ENCODE measurements at regions of chr16 and their contacts with region 1.

Region 1: DNA sequence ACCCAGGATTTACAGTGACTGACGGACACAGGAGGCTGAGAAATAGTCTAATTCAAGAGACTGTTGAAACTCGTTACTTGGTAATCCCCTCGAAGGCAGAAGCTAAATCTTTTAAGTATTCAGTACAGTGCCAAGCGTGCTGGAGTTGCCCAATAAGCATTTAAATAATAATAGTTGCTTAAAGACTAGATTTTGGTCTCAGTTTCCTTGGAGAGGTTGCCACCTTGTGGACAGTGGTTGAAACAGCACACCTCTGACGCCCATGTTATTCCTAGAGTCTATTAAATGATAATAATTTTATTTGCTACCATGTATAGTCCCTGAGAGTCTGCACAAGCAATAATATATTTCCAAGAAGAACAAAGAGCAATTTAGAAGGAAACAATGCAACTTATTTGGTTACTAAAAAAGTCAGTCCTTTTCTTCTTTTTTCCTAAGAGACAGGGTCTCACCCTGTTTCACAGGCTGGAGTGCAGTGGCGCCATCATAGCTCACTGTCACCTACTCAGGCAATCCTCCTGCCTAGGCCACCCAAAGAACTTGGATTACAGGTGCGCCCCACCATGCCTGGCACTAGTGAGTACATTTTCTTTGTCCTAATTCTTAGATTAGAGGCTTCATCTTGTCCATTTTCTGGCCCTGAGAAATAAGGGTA is 138.0 kb upstream of the NUDT7 start:
- DNase-seq: peak; percentile 89
- H3K4me3 ChIP-seq: no peak overlapping the region
- H3K27ac ChIP-seq: peak overlapping the region; percentile 99
- H3K4me1 ChIP-seq: peaks cover 57% of the 10 kb centered on the region
- H3K27me3 ChIP-seq: no peaks in the 10 kb centered on the region
- CTCF ChIP-seq: peak; percentile 69 to 73
- POLR2A ChIP-seq: no peak

Region 2: GRCh38 chr16:77211880-77212740 is 372.2 kb before region 1 on chr16:
- CTCF ChIA-PET with region 1: interaction called, 4 read pairs
- POLR2A ChIA-PET with region 1: no interaction called
- dilution Hi-C with region 1: no loop called
- intact Hi-C with region 1: loop called (anchors 1 kb)
- DNase-seq: peak; percentile 48
- H3K4me3 ChIP-seq: peak overlapping the region; percentile 43 to 70 (median 57)
- H3K27ac ChIP-seq: peak overlapping the region; percentile 48
- H3K4me1 ChIP-seq: peaks cover 17% of the 10 kb centered on the region
- H3K27me3 ChIP-seq: no peaks in the 10 kb centered on the region
- CTCF ChIP-seq: no peak
- POLR2A ChIP-seq: no peak

Region 3: DNA sequence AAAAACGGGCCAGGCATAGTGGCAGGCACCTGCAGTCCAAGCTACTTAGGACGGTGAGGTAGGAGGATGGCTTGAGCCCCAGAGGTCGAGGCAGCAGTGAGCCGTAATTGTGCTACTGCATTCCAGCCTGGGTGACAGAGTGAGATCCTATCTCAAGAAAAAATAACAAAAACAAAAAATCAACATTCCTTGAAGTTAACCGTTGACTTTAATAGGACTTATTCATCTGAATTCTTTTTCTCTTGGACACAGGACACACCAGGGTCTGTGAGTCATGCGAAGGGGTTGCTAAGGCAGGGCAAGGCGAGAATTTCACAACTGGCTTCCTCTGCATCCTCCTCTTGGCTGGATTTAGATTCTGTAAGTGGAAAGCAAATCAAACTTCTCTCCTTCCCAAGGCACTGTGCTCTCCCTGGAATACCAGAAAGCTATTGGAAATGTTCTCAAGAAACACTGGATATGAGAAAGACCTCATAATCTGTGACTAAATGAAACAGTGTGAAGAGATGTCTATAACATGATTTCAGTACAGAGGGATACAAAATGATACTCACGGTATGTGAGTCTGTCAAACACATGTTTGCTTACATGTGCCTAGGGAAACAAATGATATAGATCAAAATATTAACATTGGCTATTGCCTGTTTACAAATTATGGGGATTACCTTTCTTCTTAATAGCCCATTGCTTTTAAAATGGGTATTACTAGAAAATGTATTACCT is 285.5 kb before region 1 on chr16:
- CTCF ChIA-PET with region 1: interaction called, 5 read pairs
- POLR2A ChIA-PET with region 1: no interaction called
- dilution Hi-C with region 1: no loop called
- intact Hi-C with region 1: loop called (anchors 1 kb)
- DNase-seq: peak; percentile 98
- H3K4me3 ChIP-seq: no peak overlapping the region
- H3K27ac ChIP-seq: peak overlapping the region; percentile 98
- H3K4me1 ChIP-seq: peaks cover 44% of the 10 kb centered on the region
- H3K27me3 ChIP-seq: no peaks in the 10 kb centered on the region
- CTCF ChIP-seq: no peak
- POLR2A ChIP-seq: peak; percentile 31

Region 4: GRCh38 chr16:77416930-77417480 is 167.3 kb before region 1 on chr16:
- CTCF ChIA-PET with region 1: no interaction called
- POLR2A ChIA-PET with region 1: no interaction called
- dilution Hi-C with region 1: no loop called
- intact Hi-C with region 1: no loop called
- DNase-seq: no peak
- H3K4me3 ChIP-seq: no peak overlapping the region
- H3K27ac ChIP-seq: no peak overlapping the region
- H3K4me1 ChIP-seq: no peaks in the 10 kb centered on the region
- H3K27me3 ChIP-seq: no peaks in the 10 kb centered on the region
- CTCF ChIP-seq: no peak
- POLR2A ChIP-seq: no peak

Region 5: DNA sequence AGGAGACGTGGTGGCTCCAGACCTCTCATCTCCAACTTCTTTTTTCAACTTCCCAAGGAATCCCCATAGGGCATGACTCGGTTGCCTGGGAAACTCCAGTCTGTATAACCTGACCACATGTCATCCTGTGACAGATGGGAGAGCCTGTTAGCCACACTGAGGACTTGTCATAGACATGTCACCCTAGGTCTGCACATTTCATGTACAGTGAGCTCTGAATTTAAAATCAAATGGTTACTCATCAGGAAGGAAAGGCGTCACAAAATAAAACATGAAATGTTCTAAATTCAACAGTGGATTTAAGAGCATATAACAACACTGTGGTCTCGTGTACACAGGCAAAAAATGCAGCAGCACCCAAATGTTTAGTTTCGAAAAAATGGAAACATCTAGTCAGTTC is 127.3 kb before region 1 on chr16:
- CTCF ChIA-PET with region 1: interaction called, 13 read pairs
- POLR2A ChIA-PET with region 1: no interaction called
- dilution Hi-C with region 1: no loop called
- intact Hi-C with region 1: loop called (anchors 1 kb)
- DNase-seq: peak; percentile 93
- H3K4me3 ChIP-seq: peak overlapping the region in 1 of 3 experiments; percentile 60
- H3K27ac ChIP-seq: peak overlapping the region; percentile 95
- H3K4me1 ChIP-seq: peaks cover 19% of the 10 kb centered on the region
- H3K27me3 ChIP-seq: no peaks in the 10 kb centered on the region
- CTCF ChIP-seq: no peak
- POLR2A ChIP-seq: no peak

Region 6: GRCh38 chr16:77599793-77600415 is 15.6 kb after region 1 on chr16:
- CTCF ChIA-PET with region 1: interaction called, 46 read pairs
- POLR2A ChIA-PET with region 1: interaction called, 13 read pairs
- dilution Hi-C with region 1: no loop called
- intact Hi-C with region 1: loop called (anchors 2 kb)
- DNase-seq: peak; percentile 77
- H3K4me3 ChIP-seq: no peak overlapping the region
- H3K27ac ChIP-seq: no peak overlapping the region
- H3K4me1 ChIP-seq: peaks cover 26% of the 10 kb centered on the region
- H3K27me3 ChIP-seq: no peaks in the 10 kb centered on the region
- CTCF ChIP-seq: peak; percentile 81 to 94
- POLR2A ChIP-seq: no peak

Region 7: DNA sequence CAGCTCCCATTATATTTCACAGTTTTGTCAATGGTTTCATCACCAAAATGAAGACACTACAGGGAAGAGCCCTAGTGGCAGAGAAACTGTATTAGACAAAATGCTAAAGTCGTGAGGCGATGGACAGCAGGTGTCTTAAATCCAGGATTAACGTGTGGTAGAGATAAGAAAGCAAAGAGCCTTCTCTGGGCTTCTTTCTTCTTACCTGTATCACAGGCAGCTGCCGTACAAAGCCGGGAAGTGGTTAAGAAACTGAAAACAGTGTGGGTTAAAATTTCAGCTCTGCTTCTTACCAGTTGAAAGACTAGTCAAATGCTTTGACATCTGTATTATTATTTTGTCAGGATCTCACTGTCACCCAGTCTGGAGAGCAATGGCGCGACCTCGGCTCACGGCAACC is 39.8 kb after region 1 on chr16:
- CTCF ChIA-PET with region 1: no interaction called
- POLR2A ChIA-PET with region 1: no interaction called
- dilution Hi-C with region 1: no loop called
- intact Hi-C with region 1: no loop called
- DNase-seq: no peak
- H3K4me3 ChIP-seq: no peak overlapping the region
- H3K27ac ChIP-seq: no peak overlapping the region
- H3K4me1 ChIP-seq: no peaks in the 10 kb centered on the region
- H3K27me3 ChIP-seq: peaks cover 0 to 3% of the 10 kb centered on the region in 2 experiments
- CTCF ChIP-seq: no peak
- POLR2A ChIP-seq: no peak

Region 8: DNA sequence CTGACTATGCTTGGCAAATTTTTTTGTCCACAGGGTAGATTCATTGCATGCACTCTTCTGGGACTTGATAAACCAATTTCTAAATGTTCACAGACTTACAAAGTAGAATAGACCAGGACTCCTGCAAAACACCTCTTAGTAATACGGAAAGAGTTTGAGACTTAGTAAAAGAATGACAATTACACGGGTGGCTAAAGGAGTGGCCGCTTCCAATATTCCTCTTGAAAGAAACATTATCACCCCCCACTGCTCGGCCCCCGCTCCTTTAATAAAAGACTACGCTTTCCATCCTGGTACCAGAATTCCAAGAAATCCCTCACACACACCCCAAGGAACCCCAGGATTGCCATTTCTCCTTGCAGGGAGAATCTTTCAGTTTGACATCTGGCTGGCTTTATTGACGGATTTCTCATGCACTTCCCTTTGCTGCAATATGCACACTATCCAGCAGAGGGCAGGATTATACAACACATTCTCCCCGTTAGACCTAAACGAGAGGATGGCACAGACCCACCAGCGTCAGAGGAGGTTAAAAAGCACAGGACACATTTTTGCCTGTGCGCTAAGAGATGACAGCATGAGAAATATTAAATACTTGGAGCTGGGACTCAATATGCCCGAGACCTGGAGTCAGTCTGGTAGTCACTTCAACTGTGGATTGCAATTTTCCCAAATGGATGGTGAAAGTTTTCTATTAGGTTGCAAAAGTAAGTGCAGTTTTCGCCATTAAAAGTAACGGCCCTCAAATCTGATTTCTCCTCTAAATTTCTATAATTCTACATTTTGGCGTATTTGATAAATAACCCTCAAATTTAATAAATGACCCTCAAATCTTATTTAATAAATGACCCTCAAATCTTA is 91.4 kb after region 1 on chr16:
- CTCF ChIA-PET with region 1: interaction called, 15 read pairs
- POLR2A ChIA-PET with region 1: no interaction called
- dilution Hi-C with region 1: no loop called
- intact Hi-C with region 1: loop called (anchors 1 kb)
- DNase-seq: peak; percentile 75
- H3K4me3 ChIP-seq: no peak overlapping the region
- H3K27ac ChIP-seq: no peak overlapping the region
- H3K4me1 ChIP-seq: no peaks in the 10 kb centered on the region
- H3K27me3 ChIP-seq: peaks cover 0 to 6% of the 10 kb centered on the region in 2 experiments
- CTCF ChIP-seq: peak; percentile 74 to 96
- POLR2A ChIP-seq: no peak

Region 9: GRCh38 chr16:78099372-78100161 is 515.2 kb after region 1 on chr16 and contains the start of gene WWOX:
- CTCF ChIA-PET with region 1: interaction called, 3 read pairs
- POLR2A ChIA-PET with region 1: no interaction called
- dilution Hi-C with region 1: no loop called
- intact Hi-C with region 1: loop called (anchors 5 kb)
- DNase-seq: peak; percentile 99
- H3K4me3 ChIP-seq: peak within 1 kb of the TSS; percentile 47 to 79 (median 54)
- H3K27ac ChIP-seq: peak within 1 kb of the TSS; percentile 55
- H3K4me1 ChIP-seq: peaks cover 9% of the 10 kb centered on the region
- H3K27me3 ChIP-seq: no peaks in the 10 kb centered on the region
- CTCF ChIP-seq: peak; percentile 87 to 96
- POLR2A ChIP-seq: no peak
- total RNA-seq, gene WWOX: 12.0 and 12.5 TPM in 2 replicates

Measured in endothelial cell of umbilical vein (primary cell).